ENCODE measurements at regions of chr1 and their contacts with region 1.

Region 1: DNA sequence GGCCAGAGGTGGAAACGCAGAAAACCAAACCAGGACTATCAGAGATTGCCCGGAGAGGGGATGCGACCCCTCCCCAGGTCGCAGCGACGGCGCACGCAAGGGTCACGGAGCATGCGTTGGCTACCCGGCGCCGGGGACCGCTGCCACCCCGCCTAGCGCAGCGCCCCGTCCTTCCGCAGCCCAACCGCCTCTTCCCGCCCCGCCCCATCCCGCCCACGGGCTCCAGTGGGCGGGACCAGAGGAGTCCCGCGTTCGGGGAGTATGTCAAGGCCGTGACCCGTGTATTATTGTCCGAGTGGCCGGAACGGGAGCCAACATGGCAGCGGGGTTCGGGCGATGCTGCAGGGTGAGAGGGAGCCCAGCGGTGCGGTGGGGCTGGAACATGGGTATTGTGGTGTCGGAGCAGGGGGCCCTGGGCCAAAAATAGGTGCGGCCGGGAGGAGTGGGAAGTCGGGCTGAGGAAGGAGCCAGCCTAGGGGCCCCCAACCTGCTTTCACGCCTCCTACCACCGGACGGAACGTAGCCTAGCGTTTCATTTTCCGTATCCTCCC is at the start of gene ACADM:
- DNase-seq: peak; percentile 62 to 90 (median 80)
- ATAC-seq: peak; percentile 94
- H3K4me3 ChIP-seq: peak within 1 kb of the TSS; percentile 99
- H3K4me3 Mint-ChIP-seq: peak within 1 kb of the TSS; percentile 99
- H3K27ac ChIP-seq: peak within 1 kb of the TSS; percentile 65 to 73
- H3K27ac Mint-ChIP-seq: peak within 1 kb of the TSS; percentile 94
- H3K4me1 ChIP-seq: peaks cover 14% of the 10 kb centered on the region
- H3K4me1 Mint-ChIP-seq: peaks cover 61% of the 10 kb centered on the region
- H3K27me3 ChIP-seq: no peaks in the 10 kb centered on the region
- H3K27me3 Mint-ChIP-seq: no peaks in the 10 kb centered on the region
- CTCF ChIP-seq: no peak
- total RNA-seq, gene ACADM: 3.5 to 4.7 TPM

Region 2: GRCh38 chr1:74197657-74198552 is 1526.6 kb before region 1 on chr1 and contains the starts of genes FPGT and LRRIQ3:
- CTCF ChIA-PET with region 1: no interaction called
- POLR2A ChIA-PET with region 1: no interaction called
- intact Hi-C with region 1: loop called in 1 of 2 experiments (anchors 5 kb)
- DNase-seq: peak; percentile 92 to 98 (median 96)
- ATAC-seq: peak; percentile 94
- H3K4me3 ChIP-seq: peak within 1 kb of the TSS; percentile 76
- H3K4me3 Mint-ChIP-seq: peak within 1 kb of the TSS; percentile 93
- H3K27ac ChIP-seq: peak within 1 kb of the TSS; percentile 59 to 85
- H3K27ac Mint-ChIP-seq: peak within 1 kb of the TSS; percentile 86
- H3K4me1 ChIP-seq: peaks cover 6% of the 10 kb centered on the region
- H3K4me1 Mint-ChIP-seq: peaks cover 38% of the 10 kb centered on the region
- H3K27me3 ChIP-seq: no peaks in the 10 kb centered on the region
- H3K27me3 Mint-ChIP-seq: no peaks in the 10 kb centered on the region
- CTCF ChIP-seq: no peak
- total RNA-seq, gene FPGT: 3.0 to 4.5 TPM
- total RNA-seq, gene LRRIQ3: 0.08 to 0.25 TPM

Region 3: DNA sequence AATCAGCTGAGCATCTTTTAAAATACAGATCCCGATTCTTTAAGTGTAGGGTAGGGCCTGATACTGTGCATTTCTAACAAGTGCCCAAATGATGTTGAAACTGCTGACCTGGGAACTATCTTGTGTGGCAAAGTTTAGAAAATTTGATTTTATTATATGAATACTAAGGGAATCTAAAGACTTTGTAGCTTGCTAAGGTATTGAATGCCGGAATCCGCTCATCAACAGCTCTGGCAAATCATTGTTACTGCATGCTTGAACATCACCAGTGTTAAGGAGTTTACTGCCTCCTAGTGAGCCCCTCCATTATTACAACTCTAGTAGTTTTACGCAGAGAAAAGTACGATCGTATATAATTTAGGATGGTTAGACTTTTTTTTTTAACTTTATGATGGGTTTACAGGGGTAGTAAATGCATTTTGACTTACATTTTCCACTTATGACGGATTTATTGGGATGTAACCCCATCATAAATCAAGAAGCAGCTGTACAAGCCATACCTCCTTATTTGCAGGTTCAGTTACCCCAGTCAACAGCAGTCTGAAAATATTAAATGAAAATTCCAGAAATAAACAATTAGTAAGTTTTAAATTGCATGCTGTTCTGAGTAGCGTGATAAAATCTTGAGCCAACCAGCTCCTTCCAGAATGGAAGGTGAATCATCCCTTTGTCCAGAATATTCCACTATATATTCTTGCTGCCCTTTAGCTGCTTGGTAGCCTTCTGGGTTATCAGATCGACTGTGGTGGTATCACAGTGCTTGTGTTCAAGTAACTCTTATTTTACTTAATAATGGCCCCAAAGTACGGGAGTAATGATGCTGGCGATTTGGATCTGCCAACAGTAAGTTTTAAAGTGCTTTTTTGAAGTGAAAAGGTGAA is 990.7 kb before region 1 on chr1:
- CTCF ChIA-PET with region 1: no interaction called
- POLR2A ChIA-PET with region 1: interaction called, 3 read pairs
- intact Hi-C with region 1: loop called in 1 of 2 experiments (anchors 10 kb)
- DNase-seq: peak in 9 of 14 experiments; percentile 4 to 84 (median 32)
- ATAC-seq: peak; percentile 79
- H3K4me3 ChIP-seq: peak overlapping the region; percentile 90
- H3K4me3 Mint-ChIP-seq: peak overlapping the region; percentile 97
- H3K27ac ChIP-seq: peak overlapping the region; percentile 73 to 81
- H3K27ac Mint-ChIP-seq: peak overlapping the region; percentile 88
- H3K4me1 ChIP-seq: peaks cover 26% of the 10 kb centered on the region
- H3K4me1 Mint-ChIP-seq: peaks cover 58% of the 10 kb centered on the region
- H3K27me3 ChIP-seq: no peaks in the 10 kb centered on the region
- H3K27me3 Mint-ChIP-seq: no peaks in the 10 kb centered on the region
- CTCF ChIP-seq: peak; percentile 76

Region 4: GRCh38 chr1:75745276-75745675 is 20.7 kb after region 1 on chr1:
- CTCF ChIA-PET with region 1: no interaction called
- POLR2A ChIA-PET with region 1: no interaction called
- intact Hi-C with region 1: no loop called
- DNase-seq: peak in 3 of 14 experiments; percentile 14 to 25 (median 17)
- ATAC-seq: no peak
- H3K4me3 ChIP-seq: no peak overlapping the region
- H3K4me3 Mint-ChIP-seq: no peak overlapping the region
- H3K27ac ChIP-seq: no peak overlapping the region
- H3K27ac Mint-ChIP-seq: no peak overlapping the region
- H3K4me1 ChIP-seq: no peaks in the 10 kb centered on the region
- H3K4me1 Mint-ChIP-seq: no peaks in the 10 kb centered on the region
- H3K27me3 ChIP-seq: no peaks in the 10 kb centered on the region
- H3K27me3 Mint-ChIP-seq: no peaks in the 10 kb centered on the region
- CTCF ChIP-seq: no peak

Region 5: GRCh38 chr1:75785983-75786853 is 61.7 kb after region 1 on chr1 and contains the start of gene RABGGTB:
- CTCF ChIA-PET with region 1: no interaction called
- POLR2A ChIA-PET with region 1: interaction called, 8 read pairs
- intact Hi-C with region 1: loop called (anchors 1 to 2 kb)
- DNase-seq: peak; percentile 89 to 97 (median 92)
- ATAC-seq: peak; percentile 95
- H3K4me3 ChIP-seq: peak within 1 kb of the TSS; percentile 67
- H3K4me3 Mint-ChIP-seq: peak within 1 kb of the TSS; percentile 98
- H3K27ac ChIP-seq: peak within 1 kb of the TSS; percentile 84 to 86
- H3K27ac Mint-ChIP-seq: peak within 1 kb of the TSS; percentile 92
- H3K4me1 ChIP-seq: peaks cover 26% of the 10 kb centered on the region
- H3K4me1 Mint-ChIP-seq: peaks cover 57% of the 10 kb centered on the region
- H3K27me3 ChIP-seq: no peaks in the 10 kb centered on the region
- H3K27me3 Mint-ChIP-seq: no peaks in the 10 kb centered on the region
- CTCF ChIP-seq: no peak
- total RNA-seq, gene RABGGTB: 199 to 200 TPM

Measured in CD4-positive, alpha-beta T cell (primary cell).